Endothelial cell of umbilical vein (primary cell): ENCODE measurements at regions of chr7 and their contacts with region 1.

Region 1: DNA sequence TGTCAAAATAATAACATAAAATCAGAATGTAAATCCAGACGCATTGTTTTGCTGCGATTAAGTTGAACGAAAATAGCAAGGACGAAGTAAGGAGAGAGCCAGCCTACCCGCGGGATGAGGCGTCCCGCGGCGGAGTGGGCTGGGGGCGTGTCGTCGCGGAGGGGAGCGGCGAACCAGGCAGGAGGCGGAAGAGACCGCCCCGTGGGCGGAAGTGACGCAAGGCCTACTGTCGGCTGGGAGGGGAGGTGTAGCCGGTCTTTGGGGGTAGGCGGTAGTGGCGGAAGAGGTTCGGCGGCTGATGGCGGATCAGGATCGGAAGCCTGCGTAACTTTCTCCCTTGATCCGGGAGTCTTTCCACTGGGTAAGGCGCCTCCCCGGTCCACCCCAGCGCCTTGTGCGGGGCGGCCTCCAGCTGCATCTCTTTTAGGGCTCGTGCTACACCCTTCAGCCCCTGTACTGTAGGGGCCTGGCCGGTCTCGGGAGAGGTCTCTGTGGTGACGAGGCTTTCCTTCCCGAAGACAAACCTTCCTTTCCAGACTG is at the start of gene TAX1BP1:
- DNase-seq: peak; percentile 94
- H3K4me3 ChIP-seq: peak within 1 kb of the TSS; percentile 78 to 83 (median 81)
- H3K27ac ChIP-seq: peak within 1 kb of the TSS; percentile 93
- H3K4me1 ChIP-seq: peaks cover 13% of the 10 kb centered on the region
- H3K27me3 ChIP-seq: no peaks in the 10 kb centered on the region
- CTCF ChIP-seq: no peak
- POLR2A ChIP-seq: peak; percentile 96
- total RNA-seq, gene TAX1BP1: 70.4 and 77.7 TPM in 2 replicates

Region 2: DNA sequence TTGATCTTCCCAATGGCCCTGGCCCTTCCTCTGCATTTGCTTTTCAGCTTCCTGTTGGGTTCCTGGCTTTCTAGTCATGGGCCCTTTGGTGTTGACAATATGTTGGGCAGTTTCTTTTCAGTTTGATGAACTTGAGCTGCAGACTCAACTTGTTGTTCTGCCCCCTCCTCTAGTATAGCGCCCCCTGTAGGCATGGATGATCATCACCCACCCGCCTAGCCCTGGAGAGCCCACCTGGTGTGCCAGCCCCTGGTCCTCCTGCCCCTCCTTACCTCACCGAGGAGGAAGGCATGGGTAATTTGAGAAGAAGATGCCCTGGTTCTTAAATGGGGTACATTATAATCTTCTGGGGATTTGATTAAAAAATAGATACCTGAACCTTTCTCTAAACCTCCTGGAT is 1177.1 kb before region 1 on chr7:
- CTCF ChIA-PET with region 1: no interaction called
- POLR2A ChIA-PET with region 1: no interaction called
- dilution Hi-C with region 1: no loop called
- intact Hi-C with region 1: no loop called
- DNase-seq: no peak
- H3K4me3 ChIP-seq: no peak overlapping the region
- H3K27ac ChIP-seq: no peak overlapping the region
- H3K4me1 ChIP-seq: no peaks in the 10 kb centered on the region
- H3K27me3 ChIP-seq: peaks cover 0 to 10% of the 10 kb centered on the region in 2 experiments
- CTCF ChIP-seq: no peak
- POLR2A ChIP-seq: no peak

Region 3: GRCh38 chr7:27640914-27641580 is 98.9 kb before region 1 on chr7:
- CTCF ChIA-PET with region 1: interaction called, 4 read pairs
- POLR2A ChIA-PET with region 1: no interaction called
- dilution Hi-C with region 1: no loop called
- intact Hi-C with region 1: loop called (anchors 1 kb)
- DNase-seq: peak; percentile 96
- H3K4me3 ChIP-seq: peak overlapping the region in 1 of 3 experiments; percentile 36
- H3K27ac ChIP-seq: peak overlapping the region; percentile 85
- H3K4me1 ChIP-seq: peaks cover 18% of the 10 kb centered on the region
- H3K27me3 ChIP-seq: no peaks in the 10 kb centered on the region
- CTCF ChIP-seq: no peak
- POLR2A ChIP-seq: no peak

Region 4: DNA sequence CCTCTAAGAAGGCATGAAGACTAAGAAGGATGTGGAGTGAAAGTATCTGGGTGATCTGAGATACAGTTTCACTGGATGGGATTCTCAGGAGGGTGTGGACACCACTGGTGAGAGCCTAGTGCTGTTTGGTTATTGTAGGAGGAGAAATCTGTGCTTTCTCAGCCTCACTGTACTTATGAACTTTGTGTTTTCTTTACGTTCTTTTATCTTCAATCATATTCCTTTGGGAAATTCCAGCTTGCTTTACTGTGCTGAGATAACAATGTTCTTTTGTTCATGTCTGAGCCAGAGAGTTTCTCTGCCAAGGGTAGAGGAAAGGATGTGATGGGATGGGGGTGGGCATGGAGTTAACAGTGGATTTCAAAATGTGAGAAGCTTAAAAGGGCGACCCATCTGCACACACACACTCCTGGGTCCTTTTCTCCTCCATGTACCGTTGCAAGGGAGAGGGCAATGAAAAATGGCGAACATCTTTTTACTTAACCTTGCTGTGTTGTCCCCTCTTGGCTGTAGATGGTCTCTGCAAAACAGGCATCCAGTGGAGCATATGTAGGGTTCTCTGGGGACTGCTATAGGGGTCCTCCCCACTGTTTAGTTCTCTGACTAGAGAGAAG is 25.0 kb before region 1 on chr7:
- CTCF ChIA-PET with region 1: interaction called, 8 read pairs
- POLR2A ChIA-PET with region 1: interaction called, 7 read pairs
- dilution Hi-C with region 1: no loop called
- intact Hi-C with region 1: loop called (anchors 2 kb)
- DNase-seq: peak; percentile 96
- H3K4me3 ChIP-seq: no peak overlapping the region
- H3K27ac ChIP-seq: peak overlapping the region; percentile 50
- H3K4me1 ChIP-seq: peaks cover 19% of the 10 kb centered on the region
- H3K27me3 ChIP-seq: no peaks in the 10 kb centered on the region
- CTCF ChIP-seq: no peak
- POLR2A ChIP-seq: no peak

Region 5: DNA sequence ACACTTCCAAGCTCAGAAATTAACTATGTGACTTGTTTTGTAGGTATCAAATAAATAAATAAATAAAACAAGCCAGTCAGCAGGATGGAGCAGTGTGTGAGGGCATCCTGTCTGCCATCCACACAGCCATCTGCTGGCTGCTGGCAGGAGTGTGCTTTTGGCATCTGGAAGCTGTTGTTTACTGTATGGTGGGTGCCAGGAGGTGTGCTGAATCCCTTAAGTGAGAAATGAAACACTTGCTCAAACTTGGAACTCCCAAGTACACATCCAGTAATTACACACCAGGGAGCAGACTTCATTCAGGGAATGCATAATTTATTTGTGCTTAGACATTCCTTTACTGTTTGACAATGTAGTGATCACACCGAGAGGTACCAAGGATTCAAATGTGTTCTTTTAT is 16.9 kb before region 1 on chr7:
- CTCF ChIA-PET with region 1: interaction called, 10 read pairs
- POLR2A ChIA-PET with region 1: no interaction called
- dilution Hi-C with region 1: no loop called
- intact Hi-C with region 1: no loop called
- DNase-seq: peak; percentile 89
- H3K4me3 ChIP-seq: no peak overlapping the region
- H3K27ac ChIP-seq: no peak overlapping the region
- H3K4me1 ChIP-seq: no peaks in the 10 kb centered on the region
- H3K27me3 ChIP-seq: no peaks in the 10 kb centered on the region
- CTCF ChIP-seq: peak; percentile 28 to 37
- POLR2A ChIP-seq: no peak